Heart right ventricle (tissue), 16 donors: ENCODE measurements at regions of chr9 and their contacts with region 1.

Region 1: GRCh38 chr9:34246453-34246852 is 67.6 kb downstream of the UBAP1 start:
- DNase-seq: no peak
- ATAC-seq: peak in 2 of 8 donors; percentile 24 to 30
- H3K4me3 ChIP-seq: no peak overlapping the region
- H3K27ac ChIP-seq: peak overlapping the region in 4 of 10 donors; percentile 18 to 51 (median 38)
- H3K4me1 ChIP-seq: peaks cover 0 to 51% (median 32%) of the 10 kb centered on the region in 9 donors
- H3K27me3 ChIP-seq: no peaks in the 10 kb centered on the region
- CTCF ChIP-seq: no peak

Region 2: DNA sequence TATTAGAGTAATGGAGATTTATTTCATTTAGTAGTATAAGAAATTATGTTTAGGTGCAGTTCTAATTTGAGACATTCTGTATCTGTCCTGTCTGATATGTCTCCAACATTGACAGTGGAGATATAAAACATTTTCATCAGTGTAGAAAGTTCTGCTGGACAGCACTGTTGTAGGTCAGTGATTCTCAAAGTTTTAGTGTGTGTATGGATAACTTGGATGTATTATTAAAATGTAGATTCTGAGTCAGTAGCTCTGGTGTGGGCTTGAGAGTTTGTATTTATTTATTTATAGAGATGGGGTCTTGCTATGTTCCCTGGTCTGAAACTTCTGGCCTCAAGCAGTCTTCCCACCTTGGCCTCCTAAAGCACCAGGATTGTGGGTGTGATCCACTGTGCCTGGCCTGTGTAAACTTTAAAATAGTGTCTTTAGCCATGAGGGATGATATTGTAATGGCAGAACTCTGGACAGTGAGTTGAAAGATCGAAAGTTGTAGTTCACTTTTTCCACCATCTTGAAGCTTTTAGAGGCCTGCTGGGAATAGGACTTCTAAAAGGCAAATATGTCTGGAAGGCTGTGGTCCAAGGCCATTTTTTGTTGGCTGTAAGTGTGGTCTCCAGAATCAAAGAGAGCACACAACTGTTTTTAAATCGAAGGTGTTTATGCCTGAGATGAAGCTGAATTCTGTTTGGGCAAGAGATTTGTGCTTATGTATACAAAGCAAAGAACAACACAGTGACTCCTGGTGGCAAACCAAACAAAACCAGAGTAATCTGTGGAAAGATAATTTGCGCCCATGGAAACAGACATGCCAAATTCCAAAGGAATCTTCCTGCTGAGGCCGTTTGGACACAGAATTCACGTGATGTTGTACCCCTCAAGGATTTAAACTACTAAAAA is 55.2 kb before region 1 on chr9:
- intact Hi-C with region 1: loop called in 1 of 10 experiments (anchors 10 kb)
- DNase-seq: no peak
- ATAC-seq: peak in 1 of 8 donors; percentile 12
- H3K4me3 ChIP-seq: no peak overlapping the region
- H3K27ac ChIP-seq: peak overlapping the region in 2 of 10 donors; percentile 2 to 35
- H3K4me1 ChIP-seq: peaks cover 0 to 78% (median 49%) of the 10 kb centered on the region in 9 donors
- H3K27me3 ChIP-seq: no peaks in the 10 kb centered on the region
- CTCF ChIP-seq: peak in 5 of 9 donors; percentile 11 to 45 (median 33)